ENCODE measurements at regions of chrX and their contacts with region 1.

Region 1: GRCh38 chrX:15349046-15349445 is 13.7 kb upstream of the PIGA start:
- DNase-seq: peak in 7 of 35 experiments; percentile 1 to 52 (median 3)
- ATAC-seq: peak in 1 of 4 experiments; percentile 47
- H3K4me3 ChIP-seq: no peak overlapping the region
- H3K4me3 Mint-ChIP-seq: no peak overlapping the region
- H3K27ac ChIP-seq: no peak overlapping the region
- H3K27ac Mint-ChIP-seq: no peak overlapping the region
- H3K4me1 ChIP-seq: no peaks in the 10 kb centered on the region
- H3K4me1 Mint-ChIP-seq: no peaks in the 10 kb centered on the region
- H3K27me3 ChIP-seq: no peaks in the 10 kb centered on the region
- H3K27me3 Mint-ChIP-seq: peaks cover 0 to 8% of the 10 kb centered on the region in 2 donors

Region 2: DNA sequence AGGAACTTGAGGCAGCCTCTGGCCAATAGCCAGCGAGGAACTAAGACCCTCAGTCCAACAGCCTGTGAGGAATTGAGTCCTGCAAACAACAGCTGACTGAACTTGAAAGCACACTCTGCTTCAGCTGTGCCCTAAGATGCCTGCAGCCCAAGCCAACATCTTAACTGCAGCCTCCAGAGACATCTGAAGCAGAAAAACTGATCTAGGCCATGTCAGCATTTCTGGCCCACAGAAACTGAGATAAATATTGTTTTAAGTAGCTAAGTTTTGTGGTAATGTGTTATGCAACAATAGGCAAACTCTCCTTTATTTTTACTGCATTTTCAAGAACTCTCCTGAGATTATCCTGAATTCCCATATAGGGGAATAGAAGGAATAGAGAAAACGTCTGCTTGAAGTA is 10.7 kb after region 1 on chrX:
- CTCF ChIA-PET with region 1: no interaction called
- POLR2A ChIA-PET with region 1: no interaction called
- DNase-seq: no peak
- ATAC-seq: no peak
- H3K4me3 ChIP-seq: no peak overlapping the region
- H3K4me3 Mint-ChIP-seq: no peak overlapping the region
- H3K27ac ChIP-seq: no peak overlapping the region
- H3K27ac Mint-ChIP-seq: no peak overlapping the region
- H3K4me1 ChIP-seq: no peaks in the 10 kb centered on the region
- H3K4me1 Mint-ChIP-seq: no peaks in the 10 kb centered on the region
- H3K27me3 ChIP-seq: no peaks in the 10 kb centered on the region
- H3K27me3 Mint-ChIP-seq: peaks cover 0 to 38% of the 10 kb centered on the region in 2 donors

Region 3: DNA sequence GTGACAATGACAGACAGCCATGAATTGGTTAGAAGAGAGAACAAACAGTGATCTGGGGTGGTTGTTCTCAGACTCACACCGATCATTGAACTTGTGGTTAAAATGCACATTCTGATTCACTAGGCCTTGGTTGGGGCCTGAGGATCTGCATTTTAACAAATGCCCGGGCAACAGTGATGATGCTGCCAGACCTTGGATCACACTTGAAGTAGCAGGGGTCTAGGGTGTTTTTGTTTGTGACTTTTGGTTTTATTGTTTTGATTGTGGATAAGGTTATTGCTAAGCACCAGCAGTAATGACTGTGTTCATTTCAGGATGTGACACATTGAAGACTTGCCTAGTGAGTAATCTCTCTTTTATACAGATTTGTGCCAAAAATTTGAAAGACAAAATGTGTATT is 1473.7 kb after region 1 on chrX:
- CTCF ChIA-PET with region 1: no interaction called
- POLR2A ChIA-PET with region 1: interaction called in 1 of 2 experiments, 13 read pairs
- DNase-seq: no peak
- ATAC-seq: no peak
- H3K4me3 ChIP-seq: no peak overlapping the region
- H3K4me3 Mint-ChIP-seq: no peak overlapping the region
- H3K27ac ChIP-seq: no peak overlapping the region
- H3K27ac Mint-ChIP-seq: no peak overlapping the region
- H3K4me1 ChIP-seq: no peaks in the 10 kb centered on the region
- H3K4me1 Mint-ChIP-seq: peaks cover 0 to 7% (median 6%) of the 10 kb centered on the region in 3 donors
- H3K27me3 ChIP-seq: no peaks in the 10 kb centered on the region
- H3K27me3 Mint-ChIP-seq: no peaks in the 10 kb centered on the region